OCI-LY7 (cell line): ENCODE measurements at regions of chr21 and their contacts with region 1.

Region 1: GRCh38 chr21:25254491-25255174 is 352.6 kb downstream of the MRPL39 start:
- DNase-seq: no peak
- H3K4me3 ChIP-seq: no peak overlapping the region
- H3K27ac ChIP-seq: no peak overlapping the region
- H3K4me1 ChIP-seq: no peaks in the 10 kb centered on the region
- CTCF ChIP-seq: no peak

Region 2: GRCh38 chr21:25191141-25191540 is 63.5 kb before region 1 on chr21:
- CTCF ChIA-PET with region 1: no interaction called
- POLR2A ChIA-PET with region 1: no interaction called
- intact Hi-C with region 1: loop called (anchors 10 kb)
- DNase-seq: no peak
- H3K4me3 ChIP-seq: no peak overlapping the region
- H3K27ac ChIP-seq: no peak overlapping the region
- H3K4me1 ChIP-seq: no peaks in the 10 kb centered on the region
- CTCF ChIP-seq: no peak